Caco-2 (cell line): ENCODE measurements at regions of chr1 and their contacts with region 1.

Region 1: DNA sequence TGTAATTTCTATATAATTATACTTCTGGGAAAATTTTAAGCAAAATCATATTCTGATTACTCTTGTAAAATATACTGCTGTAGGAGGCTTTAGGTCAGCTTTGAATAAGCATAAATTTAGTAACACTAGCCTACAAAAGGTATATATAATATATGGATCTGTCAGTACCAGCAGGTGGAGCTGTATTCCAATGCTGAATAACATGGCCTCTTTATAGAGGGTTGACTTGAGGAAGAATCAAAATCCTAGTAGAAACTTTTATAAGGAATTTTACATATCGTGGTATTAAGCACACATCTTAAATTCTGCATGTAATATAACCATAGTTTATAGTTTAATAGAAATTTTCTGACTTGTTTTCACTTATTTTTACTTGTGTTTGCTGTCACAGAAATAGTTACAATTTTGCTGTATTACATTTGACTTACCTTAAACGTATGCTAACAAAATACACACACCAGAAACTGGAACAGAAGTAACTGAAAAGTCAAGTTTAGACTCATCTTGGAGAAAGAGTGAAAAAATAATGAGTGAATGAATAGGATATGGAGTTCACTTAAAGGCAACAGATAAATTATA is 79.3 kb downstream of the HMCN1 start:
- DNase-seq: peak in 1 of 2 experiments; percentile 43
- H3K4me3 ChIP-seq: no peak overlapping the region
- H3K4me3 Mint-ChIP-seq: no peak overlapping the region
- H3K27ac Mint-ChIP-seq: no peak overlapping the region
- H3K4me1 ChIP-seq: no peaks in the 10 kb centered on the region
- H3K4me1 Mint-ChIP-seq: no peaks in the 10 kb centered on the region
- H3K27me3 ChIP-seq: no peaks in the 10 kb centered on the region
- H3K27me3 Mint-ChIP-seq: no peaks in the 10 kb centered on the region
- CTCF ChIP-seq: peak; percentile 45 to 59

Region 2: GRCh38 chr1:185720633-185721272 is 92.7 kb before region 1 on chr1:
- CTCF ChIA-PET with region 1: no interaction called
- POLR2A ChIA-PET with region 1: no interaction called
- intact Hi-C with region 1: loop called (anchors 10 kb)
- DNase-seq: peak in 1 of 2 experiments; percentile 14
- H3K4me3 ChIP-seq: no peak overlapping the region
- H3K4me3 Mint-ChIP-seq: no peak overlapping the region
- H3K27ac Mint-ChIP-seq: no peak overlapping the region
- H3K4me1 ChIP-seq: no peaks in the 10 kb centered on the region
- H3K4me1 Mint-ChIP-seq: no peaks in the 10 kb centered on the region
- H3K27me3 ChIP-seq: no peaks in the 10 kb centered on the region
- H3K27me3 Mint-ChIP-seq: peaks cover 4% of the 10 kb centered on the region
- CTCF ChIP-seq: peak; percentile 40 to 45

Region 3: DNA sequence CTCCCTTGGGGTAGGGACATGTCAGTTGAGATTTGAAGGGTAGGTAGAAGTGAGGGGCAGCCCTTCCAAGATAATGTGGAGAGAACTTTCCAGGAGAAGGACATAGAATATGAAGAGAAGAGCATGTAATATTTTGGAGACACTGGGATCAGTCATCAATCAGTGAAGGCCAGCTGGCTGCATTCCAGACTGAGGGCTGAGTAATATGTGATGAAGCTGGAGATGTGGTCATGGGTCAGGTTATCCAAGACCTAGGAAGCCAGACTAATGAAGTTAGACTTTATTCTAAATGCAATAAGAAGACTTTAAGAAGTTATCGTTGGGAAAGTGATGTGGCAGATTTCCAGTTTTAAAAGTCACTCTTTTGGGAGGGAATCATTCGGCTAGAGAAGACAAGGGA is 182.7 kb after region 1 on chr1:
- CTCF ChIA-PET with region 1: no interaction called
- POLR2A ChIA-PET with region 1: no interaction called
- intact Hi-C with region 1: loop called (anchors 10 kb)
- DNase-seq: no peak
- H3K4me3 ChIP-seq: no peak overlapping the region
- H3K4me3 Mint-ChIP-seq: no peak overlapping the region
- H3K27ac Mint-ChIP-seq: no peak overlapping the region
- H3K4me1 ChIP-seq: no peaks in the 10 kb centered on the region
- H3K4me1 Mint-ChIP-seq: no peaks in the 10 kb centered on the region
- H3K27me3 ChIP-seq: no peaks in the 10 kb centered on the region
- H3K27me3 Mint-ChIP-seq: peaks cover 9% of the 10 kb centered on the region
- CTCF ChIP-seq: no peak

Region 4: DNA sequence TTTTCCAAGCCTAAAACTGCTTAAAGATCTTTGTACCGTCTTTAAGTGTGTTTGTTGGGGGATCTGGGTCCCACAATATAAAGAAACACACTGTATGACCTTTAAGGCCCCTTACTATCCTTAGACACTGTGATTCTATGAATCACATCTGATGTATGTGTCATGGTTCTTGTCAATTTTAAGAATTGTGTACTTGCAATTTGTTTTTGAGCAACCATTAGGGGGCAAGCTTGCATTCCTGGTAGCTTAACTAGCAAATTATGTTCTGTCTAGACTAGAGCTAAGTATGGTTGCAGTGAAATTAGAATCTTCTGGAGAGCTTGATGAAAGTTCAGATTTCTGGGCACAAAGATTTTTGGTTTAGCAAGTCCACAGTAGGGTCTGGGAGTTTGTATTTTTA is 342.1 kb after region 1 on chr1:
- CTCF ChIA-PET with region 1: no interaction called
- POLR2A ChIA-PET with region 1: no interaction called
- intact Hi-C with region 1: loop called (anchors 1 kb)
- DNase-seq: peak in 1 of 2 experiments; percentile 28
- H3K4me3 ChIP-seq: no peak overlapping the region
- H3K4me3 Mint-ChIP-seq: no peak overlapping the region
- H3K27ac Mint-ChIP-seq: no peak overlapping the region
- H3K4me1 ChIP-seq: peaks cover 15% of the 10 kb centered on the region
- H3K4me1 Mint-ChIP-seq: peaks cover 8% of the 10 kb centered on the region
- H3K27me3 ChIP-seq: no peaks in the 10 kb centered on the region
- H3K27me3 Mint-ChIP-seq: peaks cover 3% of the 10 kb centered on the region
- CTCF ChIP-seq: peak; percentile 49 to 55